K562 (cell line): ENCODE measurements at regions of chr5 and their contacts with region 1.

Region 1: DNA sequence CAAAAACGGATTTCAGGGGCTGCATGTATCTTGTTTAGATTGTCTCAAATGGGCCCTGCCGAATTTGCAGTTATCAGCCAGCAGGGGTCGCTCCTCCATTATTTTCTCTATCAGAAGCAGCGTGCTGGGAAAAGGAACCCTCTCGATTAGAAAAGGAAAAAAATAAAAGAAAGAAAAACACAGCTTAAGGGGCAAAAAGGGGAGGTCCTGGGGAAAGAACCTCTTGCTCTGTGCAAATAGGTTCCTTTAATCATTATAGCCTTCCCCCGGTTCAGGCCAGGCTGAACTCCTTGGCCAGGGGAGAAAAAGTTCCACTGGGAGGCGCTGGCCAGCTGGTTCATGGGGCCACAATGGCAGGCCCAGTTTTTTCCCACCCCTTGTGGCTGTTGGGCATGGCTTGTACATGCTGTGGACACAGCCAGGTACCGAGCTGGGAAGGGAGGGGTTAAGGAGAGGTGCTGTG is 25.0 kb upstream of the CAPSL start:
- DNase-seq: peak; percentile 48 to 58 (median 57)
- ATAC-seq: peak; percentile 97
- H3K4me3 ChIP-seq: no peak overlapping the region; the same call in 1 of the 2 replicates
- H3K27ac ChIP-seq: no peak overlapping the region
- H3K4me1 ChIP-seq: no peaks in the 10 kb centered on the region
- H3K27me3 ChIP-seq: no peaks in the 10 kb centered on the region; a peak in 1 of 5 replicates
- CTCF ChIP-seq: peak; percentile 69 to 90 (median 87)
- EP300 ChIP-seq: no peak
- POLR2A ChIP-seq: no peak
- RAD21 ChIP-seq: peak; percentile 34 to 63; a peak in 3 of 4 replicates

Region 2: GRCh38 chr5:36040651-36041537 is 77.5 kb after region 1 on chr5:
- CTCF ChIA-PET with region 1: no interaction called
- POLR2A ChIA-PET with region 1: no interaction called
- in situ Hi-C with region 1: no loop called
- intact Hi-C with region 1: loop called (anchors 5 kb)
- DNase-seq: no peak
- ATAC-seq: no peak
- H3K4me3 ChIP-seq: no peak overlapping the region
- H3K27ac ChIP-seq: no peak overlapping the region
- H3K4me1 ChIP-seq: no peaks in the 10 kb centered on the region
- H3K27me3 ChIP-seq: peaks cover 0 to under 1% of the 10 kb centered on the region in 2 experiments; a peak in 1 of 5 replicates
- CTCF ChIP-seq: no peak
- EP300 ChIP-seq: no peak
- POLR2A ChIP-seq: no peak
- RAD21 ChIP-seq: no peak

Region 3: DNA sequence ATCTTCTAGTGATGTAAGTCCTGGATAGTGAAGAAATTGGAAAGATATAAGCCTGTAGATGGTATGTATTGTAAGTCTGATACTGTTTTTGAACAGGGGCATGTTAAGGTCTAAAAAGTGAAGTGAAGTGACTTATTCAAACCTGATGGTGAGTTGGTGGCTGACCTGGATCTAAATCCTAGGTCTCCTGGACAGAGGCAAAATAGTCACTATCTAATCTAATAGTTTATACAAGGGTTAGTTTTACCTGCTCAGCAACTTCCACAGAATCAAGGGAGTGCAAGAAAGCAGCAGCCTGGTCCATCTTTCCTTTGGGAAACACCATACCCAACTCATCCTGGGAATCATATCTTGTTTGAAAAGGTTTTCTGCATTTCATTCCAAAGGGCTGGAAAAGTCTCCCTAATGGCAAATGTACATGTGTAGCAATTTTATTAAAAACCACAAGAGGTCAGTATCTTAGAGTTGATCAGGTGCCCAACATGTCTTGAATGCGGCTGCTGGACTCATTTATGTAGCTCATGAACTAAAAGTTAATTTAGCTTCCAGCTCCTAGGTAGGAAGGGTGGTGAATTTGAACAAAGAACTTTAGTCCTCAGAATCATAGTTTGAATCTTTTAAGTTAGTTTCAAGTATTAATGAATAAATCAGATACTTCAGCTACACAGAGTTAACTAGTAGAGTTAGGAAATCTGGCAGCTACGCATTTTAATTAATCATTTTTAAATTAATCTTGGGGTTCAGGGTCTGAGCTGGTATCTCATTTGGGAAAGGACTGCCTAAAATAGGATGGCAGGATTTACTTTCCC is 214.5 kb after region 1 on chr5:
- CTCF ChIA-PET with region 1: no interaction called
- POLR2A ChIA-PET with region 1: no interaction called
- in situ Hi-C with region 1: no loop called
- intact Hi-C with region 1: loop called (anchors 10 kb)
- DNase-seq: peak in 2 of 4 experiments; percentile 17 to 37
- ATAC-seq: peak; percentile 81
- H3K4me3 ChIP-seq: no peak overlapping the region
- H3K27ac ChIP-seq: no peak overlapping the region
- H3K4me1 ChIP-seq: no peaks in the 10 kb centered on the region
- H3K27me3 ChIP-seq: no peaks in the 10 kb centered on the region
- CTCF ChIP-seq: peak; percentile 36 to 65 (median 52); a peak in 5 of 6 replicates
- EP300 ChIP-seq: no peak
- POLR2A ChIP-seq: no peak
- RAD21 ChIP-seq: peak; percentile 43 to 70

Region 4: GRCh38 chr5:36305571-36306326 is 342.3 kb after region 1 on chr5:
- CTCF ChIA-PET with region 1: no interaction called
- POLR2A ChIA-PET with region 1: no interaction called
- in situ Hi-C with region 1: no loop called
- intact Hi-C with region 1: loop called (anchors 1 kb)
- DNase-seq: peak in 2 of 4 experiments; percentile 34 to 57
- ATAC-seq: peak; percentile 92
- H3K4me3 ChIP-seq: no peak overlapping the region
- H3K27ac ChIP-seq: no peak overlapping the region
- H3K4me1 ChIP-seq: no peaks in the 10 kb centered on the region
- H3K27me3 ChIP-seq: 0 out of 5 replicates have a peak, but pooled peaks cover 2 to 4% of the 10 kb centered on the region in 2 experiments
- CTCF ChIP-seq: peak; percentile 80 to 89 (median 86)
- EP300 ChIP-seq: no peak
- POLR2A ChIP-seq: no peak
- RAD21 ChIP-seq: peak; percentile 89 to 92

Region 5: DNA sequence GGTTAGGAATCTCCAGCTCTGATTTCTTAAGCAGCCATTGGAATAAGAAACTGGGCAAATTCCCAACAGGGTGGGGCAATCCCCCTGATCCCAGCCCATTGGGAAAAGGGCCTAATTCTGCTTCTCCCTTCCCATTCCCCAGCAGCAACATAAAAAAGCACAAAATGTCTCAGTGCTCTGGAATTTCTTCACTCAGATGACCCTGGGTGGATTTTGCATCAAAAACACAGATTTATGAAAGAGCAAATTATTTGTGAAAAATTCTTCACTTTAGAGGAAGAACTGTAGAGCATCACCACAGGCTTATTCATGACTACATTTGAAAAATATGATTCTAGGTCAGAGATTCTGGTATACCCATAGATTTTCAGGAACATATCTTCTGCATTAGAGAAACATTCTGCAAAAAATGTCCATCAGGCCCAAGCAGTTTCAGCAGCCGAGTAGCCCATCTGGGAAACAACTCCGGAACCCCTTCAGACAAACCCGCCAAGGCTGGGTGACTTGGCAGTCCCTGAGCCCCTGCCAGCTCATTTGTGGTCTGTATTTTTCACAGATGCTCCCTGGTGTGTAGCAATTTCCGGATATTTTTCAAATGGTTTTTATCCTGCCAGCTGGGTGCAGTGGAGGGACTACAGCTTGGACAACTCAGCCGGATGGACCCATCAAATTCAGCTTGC is 440.4 kb after region 1 on chr5:
- CTCF ChIA-PET with region 1: no interaction called
- POLR2A ChIA-PET with region 1: no interaction called
- in situ Hi-C with region 1: no loop called
- intact Hi-C with region 1: loop called (anchors 10 kb)
- DNase-seq: no peak
- ATAC-seq: no peak
- H3K4me3 ChIP-seq: no peak overlapping the region
- H3K27ac ChIP-seq: no peak overlapping the region
- H3K4me1 ChIP-seq: no peaks in the 10 kb centered on the region
- H3K27me3 ChIP-seq: peaks cover 10 to 12% of the 10 kb centered on the region in 2 experiments; a peak in 4 of 5 replicates
- CTCF ChIP-seq: no peak
- EP300 ChIP-seq: no peak
- POLR2A ChIP-seq: no peak
- RAD21 ChIP-seq: no peak

Region 6: GRCh38 chr5:36507332-36507952 is 544.0 kb after region 1 on chr5:
- CTCF ChIA-PET with region 1: no interaction called
- POLR2A ChIA-PET with region 1: no interaction called
- in situ Hi-C with region 1: no loop called
- intact Hi-C with region 1: loop called (anchors 10 kb)
- DNase-seq: peak; percentile 84 to 87 (median 86)
- ATAC-seq: peak; percentile 95
- H3K4me3 ChIP-seq: no peak overlapping the region
- H3K27ac ChIP-seq: no peak overlapping the region
- H3K4me1 ChIP-seq: no peaks in the 10 kb centered on the region
- H3K27me3 ChIP-seq: peaks cover 0 to 4% of the 10 kb centered on the region in 2 experiments; a peak in 1 of 5 replicates
- CTCF ChIP-seq: peak; percentile 83 to 88 (median 86)
- EP300 ChIP-seq: no peak
- POLR2A ChIP-seq: no peak
- RAD21 ChIP-seq: peak; percentile 81 to 92